ENCODE measurements at regions of chr18 and their contacts with region 1.

Region 1: DNA sequence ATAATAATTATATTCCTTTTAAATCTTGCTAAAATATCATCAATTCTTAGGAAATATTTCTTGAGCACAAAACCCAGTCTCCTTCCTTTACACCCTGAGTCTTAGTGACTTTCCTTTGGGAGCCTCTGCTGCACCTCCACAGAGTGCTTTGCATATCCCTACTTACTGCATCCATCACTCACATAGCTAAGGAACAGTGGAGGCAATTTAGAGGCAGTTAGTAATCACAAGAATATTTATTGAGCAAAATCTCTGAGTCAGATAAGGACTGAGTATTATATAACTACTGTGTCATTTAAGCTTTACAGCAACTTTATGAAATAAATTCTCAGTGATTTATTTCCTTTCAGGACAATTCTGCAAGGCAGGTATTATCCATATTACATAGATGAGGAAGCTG is 327.7 kb downstream of the TMX3 start:
- DNase-seq: no peak
- H3K4me3 ChIP-seq: no peak overlapping the region
- H3K27ac ChIP-seq: no peak overlapping the region
- H3K4me1 ChIP-seq: no peaks in the 10 kb centered on the region
- H3K27me3 ChIP-seq: no peaks in the 10 kb centered on the region
- CTCF ChIP-seq: no peak
- EP300 ChIP-seq: no peak
- POLR2A ChIP-seq: no peak

Region 2: DNA sequence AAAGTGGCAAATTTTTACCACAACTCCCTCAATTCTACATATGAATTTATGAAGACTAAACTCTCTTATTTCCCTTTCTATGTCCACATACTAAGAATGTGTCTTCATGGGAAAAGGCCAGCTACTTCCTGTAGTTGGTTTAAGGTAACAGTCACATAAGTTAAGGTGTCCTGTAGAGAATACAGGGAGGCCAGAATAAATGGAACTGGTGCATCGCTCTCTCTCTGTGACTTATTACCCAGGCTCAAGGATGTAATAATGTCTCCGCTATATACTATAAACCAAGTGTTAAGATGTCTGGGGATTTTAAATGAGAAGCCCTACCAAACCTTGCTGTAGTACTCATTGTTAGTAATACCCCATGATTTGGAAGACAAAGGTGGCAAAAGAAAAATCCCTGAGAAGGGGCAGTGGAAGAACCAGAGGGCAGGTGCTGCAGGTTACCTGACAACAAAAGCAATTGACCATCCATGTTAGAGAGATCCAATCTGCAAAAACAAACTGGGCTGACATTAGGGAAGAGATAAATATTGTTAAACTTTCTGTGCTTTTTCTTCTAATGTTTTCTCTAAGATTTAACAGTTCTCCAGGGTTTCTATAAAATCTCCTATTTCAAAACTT is 45.1 kb before region 1 on chr18:
- in situ Hi-C with region 1: no loop called
- intact Hi-C with region 1: loop called (anchors 1 kb)
- DNase-seq: no peak
- H3K4me3 ChIP-seq: no peak overlapping the region
- H3K27ac ChIP-seq: no peak overlapping the region
- H3K4me1 ChIP-seq: no peaks in the 10 kb centered on the region
- H3K27me3 ChIP-seq: no peaks in the 10 kb centered on the region
- CTCF ChIP-seq: no peak
- EP300 ChIP-seq: no peak
- POLR2A ChIP-seq: no peak

Measured in transverse colon (tissue), 4 donors.